ENCODE measurements at regions of chr2 and their contacts with region 1.

Region 1: GRCh38 chr2:9029721-9030120 is 26.2 kb upstream of the MBOAT2 start:
- DNase-seq: no peak
- ATAC-seq: peak; percentile 79
- H3K4me3 ChIP-seq: no peak overlapping the region
- H3K27ac ChIP-seq: no peak overlapping the region
- H3K4me1 ChIP-seq: peaks cover 18% of the 10 kb centered on the region; the same call in 1 of the 2 replicates
- H3K27me3 ChIP-seq: no peaks in the 10 kb centered on the region; the same call in 1 of the 2 replicates
- CTCF ChIP-seq: no peak

Region 2: GRCh38 chr2:9010866-9011265 is 18.9 kb before region 1 on chr2:
- CTCF ChIA-PET with region 1: interaction called, 12 read pairs
- POLR2A ChIA-PET with region 1: no interaction called
- in situ Hi-C with region 1: no loop called
- intact Hi-C with region 1: no loop called
- DNase-seq: no peak
- ATAC-seq: no peak
- H3K4me3 ChIP-seq: no peak overlapping the region
- H3K27ac ChIP-seq: no peak overlapping the region
- H3K4me1 ChIP-seq: peaks cover 8% of the 10 kb centered on the region
- H3K27me3 ChIP-seq: no peaks in the 10 kb centered on the region
- CTCF ChIP-seq: no peak

Region 3: GRCh38 chr2:9191041-9191481 is 161.3 kb after region 1 on chr2:
- CTCF ChIA-PET with region 1: no interaction called
- POLR2A ChIA-PET with region 1: no interaction called
- in situ Hi-C with region 1: no loop called
- intact Hi-C with region 1: no loop called
- DNase-seq: no peak
- ATAC-seq: peak; percentile 87
- H3K4me3 ChIP-seq: no peak overlapping the region
- H3K27ac ChIP-seq: peak overlapping the region; percentile 51; the same call in 1 of the 2 replicates
- H3K4me1 ChIP-seq: peaks cover 10% of the 10 kb centered on the region; the same call in 1 of the 2 replicates
- H3K27me3 ChIP-seq: no peaks in the 10 kb centered on the region
- CTCF ChIP-seq: no peak

Measured in Panc1 (cell line).